ENCODE measurements at regions of chr6 and their contacts with region 1.

Region 1: DNA sequence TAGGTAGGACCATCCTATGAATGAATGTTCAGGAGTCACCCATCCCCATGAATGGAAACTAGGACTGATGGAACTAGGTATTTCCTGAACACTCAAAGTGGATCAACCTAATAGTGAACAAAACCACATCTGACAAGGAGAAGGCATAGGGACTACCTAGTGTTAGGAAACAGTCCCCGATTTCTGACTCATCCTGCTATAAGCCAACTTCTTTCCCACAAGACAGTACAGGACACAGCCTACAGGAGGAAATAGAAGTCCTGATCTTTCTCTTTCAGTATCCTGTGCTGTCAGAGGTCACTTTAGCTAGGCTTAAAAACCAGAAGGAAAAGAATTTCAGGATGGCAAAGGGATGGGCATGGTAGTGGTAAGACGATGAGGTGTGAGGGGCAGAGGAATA is 19.5 kb upstream of the GMDS start:
- DNase-seq: no peak
- ATAC-seq: no peak
- H3K4me3 Mint-ChIP-seq: no peak overlapping the region
- H3K27ac Mint-ChIP-seq: no peak overlapping the region
- H3K4me1 Mint-ChIP-seq: no peaks in the 10 kb centered on the region
- H3K27me3 Mint-ChIP-seq: no peaks in the 10 kb centered on the region
- CTCF ChIP-seq: no peak

Region 2: DNA sequence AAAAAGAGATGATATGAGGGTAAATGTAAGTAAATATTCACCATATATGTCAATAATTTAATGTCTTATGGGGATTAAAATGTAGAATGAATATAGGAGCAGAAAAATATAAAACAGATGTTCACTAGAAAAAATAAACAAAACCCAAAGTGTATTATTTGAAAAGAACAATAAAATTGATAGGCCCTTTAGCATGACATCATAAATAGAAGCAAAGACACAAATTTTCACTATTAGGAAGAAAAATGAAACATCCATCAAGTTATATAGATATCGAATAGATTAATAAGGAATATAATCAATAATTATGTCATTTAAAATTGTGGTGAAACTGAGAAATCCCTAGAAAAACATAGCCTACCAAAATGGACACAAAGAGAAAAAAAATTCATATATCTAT is 20.6 kb after region 1 on chr6:
- CTCF ChIA-PET with region 1: no interaction called
- POLR2A ChIA-PET with region 1: interaction called, 12 read pairs
- intact Hi-C with region 1: no loop called
- DNase-seq: no peak
- ATAC-seq: no peak
- H3K4me3 Mint-ChIP-seq: no peak overlapping the region
- H3K27ac Mint-ChIP-seq: no peak overlapping the region
- H3K4me1 Mint-ChIP-seq: no peaks in the 10 kb centered on the region
- H3K27me3 Mint-ChIP-seq: no peaks in the 10 kb centered on the region
- CTCF ChIP-seq: no peak